WTC11 (cell line): ENCODE measurements at regions of chr2 and their contacts with region 1.

Region 1: GRCh38 chr2:1750933-1751766 is 6.8 kb upstream of the PXDN start:
- DNase-seq: peak; percentile 83
- ATAC-seq: peak; percentile 95
- H3K4me3 Mint-ChIP-seq: no peak overlapping the region
- H3K27ac Mint-ChIP-seq: no peak overlapping the region
- H3K4me1 Mint-ChIP-seq: peaks cover 7% of the 10 kb centered on the region
- H3K27me3 Mint-ChIP-seq: peaks cover 43% of the 10 kb centered on the region
- CTCF ChIP-seq: peak; percentile 57

Region 2: DNA sequence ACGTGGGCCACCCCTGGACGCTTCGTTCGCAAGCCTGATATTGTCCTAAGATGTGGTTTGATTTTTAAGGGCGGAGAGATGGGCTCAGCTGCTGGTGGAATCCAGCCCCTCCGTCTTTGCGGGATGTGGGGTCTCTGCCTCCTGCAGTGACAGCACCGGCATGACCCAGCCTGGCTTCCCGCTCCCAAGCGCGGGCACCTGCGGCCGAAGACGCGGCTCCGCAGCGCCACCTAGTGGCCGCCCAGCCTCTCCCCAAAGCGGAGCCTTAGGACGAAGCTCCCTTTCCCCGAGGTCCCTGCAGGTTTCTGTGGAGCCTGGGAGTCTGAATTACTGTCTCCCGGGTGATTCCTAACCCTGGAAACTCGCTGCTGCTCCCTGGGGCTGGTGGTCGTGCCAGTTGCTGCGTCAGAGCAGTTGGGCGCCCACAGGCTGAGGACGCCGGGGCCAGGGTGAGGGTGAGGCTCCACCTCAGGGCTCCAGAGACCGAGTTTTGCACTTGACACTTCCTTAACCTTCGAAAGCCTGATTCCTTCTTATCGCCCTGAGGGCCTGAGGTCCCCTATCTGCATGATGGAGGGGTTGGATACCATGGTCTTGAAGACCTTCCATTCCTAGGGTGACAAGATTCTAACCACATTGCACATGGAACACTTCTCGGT is 200.4 kb before region 1 on chr2:
- CTCF ChIA-PET with region 1: interaction called, 18 read pairs
- POLR2A ChIA-PET with region 1: no interaction called
- DNase-seq: peak; percentile 80
- ATAC-seq: peak; percentile 81
- H3K4me3 Mint-ChIP-seq: no peak overlapping the region
- H3K27ac Mint-ChIP-seq: no peak overlapping the region
- H3K4me1 Mint-ChIP-seq: 0 out of 2 replicates have a peak, but pooled peaks cover 5% of the 10 kb centered on the region
- H3K27me3 Mint-ChIP-seq: no peaks in the 10 kb centered on the region; the same call in none of the 2 replicates
- CTCF ChIP-seq: peak; percentile 98

Region 3: DNA sequence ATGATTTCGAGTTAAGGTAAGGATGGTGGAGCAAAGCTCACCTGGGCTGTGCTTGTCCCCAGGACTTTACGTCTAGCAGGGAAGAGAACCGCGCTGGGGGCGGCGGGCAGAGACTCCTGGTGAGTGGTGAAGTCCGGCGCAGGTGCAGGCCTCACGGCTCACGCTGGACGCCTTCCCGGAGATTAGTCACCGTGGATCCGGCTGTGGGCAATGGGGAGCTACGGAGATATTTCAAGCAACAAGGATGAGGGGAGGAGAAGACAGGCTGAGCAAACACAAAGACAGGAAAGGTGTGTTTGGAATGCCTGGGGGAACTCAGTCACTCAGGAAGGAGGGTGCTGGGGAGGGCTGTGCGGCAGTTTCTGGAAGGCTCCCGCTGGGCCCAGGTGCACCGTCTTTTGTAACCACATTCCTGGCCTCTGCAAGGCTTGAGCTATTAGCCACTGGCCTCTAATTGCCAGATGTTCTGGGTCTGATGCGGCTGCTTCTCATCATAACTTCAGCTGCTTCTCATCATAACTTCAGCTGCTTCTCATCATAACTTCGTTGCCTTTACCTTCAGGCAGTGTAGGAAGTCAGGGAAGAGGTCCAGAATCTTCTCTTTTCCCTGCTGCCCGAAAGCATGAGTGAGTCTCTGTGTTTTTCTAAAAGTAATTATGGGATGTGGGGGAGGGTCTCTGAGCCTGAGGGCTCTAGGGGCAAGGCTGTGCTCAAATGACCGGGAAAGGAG is 125.8 kb before region 1 on chr2:
- CTCF ChIA-PET with region 1: interaction called, 18 read pairs
- POLR2A ChIA-PET with region 1: interaction called, 5 read pairs
- DNase-seq: peak; percentile 89
- ATAC-seq: peak; percentile 93
- H3K4me3 Mint-ChIP-seq: peak overlapping the region; percentile 60
- H3K27ac Mint-ChIP-seq: peak overlapping the region; percentile 100
- H3K4me1 Mint-ChIP-seq: peaks cover 50% of the 10 kb centered on the region
- H3K27me3 Mint-ChIP-seq: no peaks in the 10 kb centered on the region; the same call in 1 of the 2 replicates
- CTCF ChIP-seq: no peak

Region 4: DNA sequence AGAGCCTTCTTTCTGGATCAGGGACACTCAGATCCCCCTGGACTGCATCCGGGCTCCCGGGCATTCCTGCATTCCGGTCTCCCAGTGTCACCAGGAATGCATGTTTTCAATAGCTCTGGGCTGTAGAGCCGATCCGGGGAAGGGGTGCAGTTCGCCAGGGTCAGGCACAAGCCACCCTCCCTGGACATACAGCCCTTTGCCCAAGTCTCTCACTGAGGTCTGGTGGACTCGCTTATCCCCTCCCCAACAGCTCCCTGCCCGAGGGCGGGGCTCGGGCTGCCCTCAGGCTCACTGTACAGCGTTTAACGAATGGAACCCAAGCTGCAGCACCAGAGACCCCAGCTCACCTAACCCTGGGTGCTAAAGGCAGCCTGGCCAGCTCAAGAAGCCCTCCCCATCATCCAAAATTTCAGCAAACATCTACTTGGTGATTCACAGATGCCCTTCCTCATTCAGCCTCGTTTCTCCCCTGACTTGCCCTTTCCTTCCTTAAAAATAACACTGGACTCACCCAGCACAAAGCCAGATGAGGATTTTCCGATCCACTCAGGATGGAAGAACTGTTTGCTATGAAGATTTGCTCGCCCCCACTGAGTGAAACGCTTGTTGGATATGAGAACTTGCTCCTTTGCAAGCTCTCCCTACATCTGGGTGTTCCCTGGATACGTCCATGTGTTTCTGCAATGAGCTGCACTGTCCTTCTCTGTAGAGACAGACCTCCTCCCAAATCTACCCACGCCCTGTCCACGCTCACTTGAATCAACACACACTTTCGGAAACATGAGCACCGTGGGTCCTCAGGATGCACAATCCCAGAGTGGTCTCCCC is 65.0 kb before region 1 on chr2:
- CTCF ChIA-PET with region 1: interaction called, 15 read pairs
- POLR2A ChIA-PET with region 1: no interaction called
- DNase-seq: peak; percentile 51
- ATAC-seq: peak; percentile 74
- H3K4me3 Mint-ChIP-seq: no peak overlapping the region
- H3K27ac Mint-ChIP-seq: peak overlapping the region; percentile 93
- H3K4me1 Mint-ChIP-seq: peaks cover 18% of the 10 kb centered on the region
- H3K27me3 Mint-ChIP-seq: no peaks in the 10 kb centered on the region
- CTCF ChIP-seq: no peak

Region 5: DNA sequence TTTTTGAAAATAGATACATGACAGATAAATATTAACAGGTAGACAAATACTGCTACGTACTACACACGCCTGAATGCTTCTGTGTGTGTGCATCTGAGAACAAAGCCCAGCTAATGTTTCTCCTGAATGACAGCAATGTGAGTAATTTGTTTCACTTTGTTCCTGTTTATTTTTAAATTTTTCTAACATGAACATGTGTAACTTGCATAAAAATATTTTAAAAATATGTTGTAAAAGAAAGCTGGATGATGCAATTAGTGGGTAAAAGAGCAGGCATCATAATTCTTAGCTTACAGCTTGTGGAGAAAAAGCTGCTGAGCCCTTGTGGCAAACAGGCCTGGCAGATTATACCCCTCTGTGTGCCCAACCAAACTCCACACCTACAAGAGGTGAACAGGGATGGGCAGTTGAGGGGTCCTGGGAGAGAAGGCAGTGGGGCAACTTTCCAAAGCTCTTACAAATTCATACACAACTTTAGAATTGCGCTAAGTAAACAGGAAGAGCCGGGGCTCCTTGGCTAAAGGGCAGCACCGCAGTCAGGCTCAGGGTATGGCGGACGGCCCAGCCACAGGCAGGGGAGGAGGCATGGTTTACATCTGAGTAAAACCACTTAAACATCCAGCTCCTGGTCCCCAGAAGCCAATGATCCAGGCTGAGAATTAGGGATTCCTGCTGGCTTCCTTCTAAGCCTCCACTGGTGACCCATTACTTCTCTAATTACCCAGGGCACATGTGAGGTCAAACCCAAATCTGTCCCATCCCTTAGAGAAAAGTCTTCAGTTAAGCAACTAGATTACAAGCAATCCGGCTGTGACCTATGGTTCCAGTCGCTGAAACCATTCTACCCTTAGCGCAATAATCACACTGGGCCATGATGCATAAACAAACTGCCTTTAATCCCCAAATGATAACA is 20.9 kb before region 1 on chr2:
- CTCF ChIA-PET with region 1: interaction called, 21 read pairs
- POLR2A ChIA-PET with region 1: no interaction called
- DNase-seq: peak; percentile 38
- ATAC-seq: peak; percentile 86
- H3K4me3 Mint-ChIP-seq: peak overlapping the region; percentile 18; the same call in 1 of the 2 replicates
- H3K27ac Mint-ChIP-seq: peak overlapping the region; percentile 88
- H3K4me1 Mint-ChIP-seq: peaks cover 60% of the 10 kb centered on the region
- H3K27me3 Mint-ChIP-seq: no peaks in the 10 kb centered on the region; the same call in 1 of the 2 replicates
- CTCF ChIP-seq: no peak

Region 6: GRCh38 chr2:1769703-1770422 is 18.7 kb after region 1 on chr2:
- CTCF ChIA-PET with region 1: interaction called, 71 read pairs
- POLR2A ChIA-PET with region 1: no interaction called
- DNase-seq: peak; percentile 95
- ATAC-seq: peak; percentile 79
- H3K4me3 Mint-ChIP-seq: no peak overlapping the region
- H3K27ac Mint-ChIP-seq: peak overlapping the region; percentile 78; the same call in 1 of the 2 replicates
- H3K4me1 Mint-ChIP-seq: peaks cover 42% of the 10 kb centered on the region
- H3K27me3 Mint-ChIP-seq: peaks cover 15% of the 10 kb centered on the region
- CTCF ChIP-seq: peak; percentile 93